CD4-positive, alpha-beta memory T cell (primary cell): ENCODE measurements at regions of chr11 and their contacts with region 1.

Region 1: GRCh38 chr11:46392421-46393230 is 1.1 kb upstream of the CHRM4 start:
- DNase-seq: peak; percentile 75 to 80 (median 76)
- H3K4me3 ChIP-seq: peak overlapping the region in 1 of 2 donors; percentile 29
- H3K4me3 Mint-ChIP-seq: peak overlapping the region; percentile 63 to 84 (median 80)
- H3K27ac ChIP-seq: no peak overlapping the region
- H3K27ac Mint-ChIP-seq: peak overlapping the region in 4 of 7 donors; percentile 15 to 81 (median 70)
- H3K4me1 ChIP-seq: peaks cover 42% of the 10 kb centered on the region
- H3K4me1 Mint-ChIP-seq: peaks cover 13 to 39% (median 24%) of the 10 kb centered on the region in 4 donors
- H3K27me3 ChIP-seq: peaks cover 23% of the 10 kb centered on the region
- H3K27me3 Mint-ChIP-seq: peaks cover 14 to 32% of the 10 kb centered on the region in 2 donors

Region 2: GRCh38 chr11:45885274-45885920 is 507.2 kb before region 1 on chr11 and contains the start of gene MAPK8IP1:
- CTCF ChIA-PET with region 1: no interaction called
- POLR2A ChIA-PET with region 1: no interaction called
- intact Hi-C with region 1: loop called (anchors 10 kb)
- DNase-seq: peak; percentile 47 to 67 (median 58)
- H3K4me3 ChIP-seq: no peak within 1 kb of the TSS
- H3K4me3 Mint-ChIP-seq: peak within 1 kb of the TSS; percentile 69 to 84 (median 76)
- H3K27ac ChIP-seq: no peak within 1 kb of the TSS
- H3K27ac Mint-ChIP-seq: peak within 1 kb of the TSS in 6 of 7 donors; percentile 29 to 75 (median 52)
- H3K4me1 ChIP-seq: peaks cover 5% of the 10 kb centered on the region
- H3K4me1 Mint-ChIP-seq: peaks cover 8 to 16% (median 11%) of the 10 kb centered on the region in 4 donors
- H3K27me3 ChIP-seq: no peaks in the 10 kb centered on the region
- H3K27me3 Mint-ChIP-seq: peaks cover 0 to 4% of the 10 kb centered on the region in 2 donors
- total RNA-seq, gene MAPK8IP1: 0.73 to 0.86 TPM

Region 3: DNA sequence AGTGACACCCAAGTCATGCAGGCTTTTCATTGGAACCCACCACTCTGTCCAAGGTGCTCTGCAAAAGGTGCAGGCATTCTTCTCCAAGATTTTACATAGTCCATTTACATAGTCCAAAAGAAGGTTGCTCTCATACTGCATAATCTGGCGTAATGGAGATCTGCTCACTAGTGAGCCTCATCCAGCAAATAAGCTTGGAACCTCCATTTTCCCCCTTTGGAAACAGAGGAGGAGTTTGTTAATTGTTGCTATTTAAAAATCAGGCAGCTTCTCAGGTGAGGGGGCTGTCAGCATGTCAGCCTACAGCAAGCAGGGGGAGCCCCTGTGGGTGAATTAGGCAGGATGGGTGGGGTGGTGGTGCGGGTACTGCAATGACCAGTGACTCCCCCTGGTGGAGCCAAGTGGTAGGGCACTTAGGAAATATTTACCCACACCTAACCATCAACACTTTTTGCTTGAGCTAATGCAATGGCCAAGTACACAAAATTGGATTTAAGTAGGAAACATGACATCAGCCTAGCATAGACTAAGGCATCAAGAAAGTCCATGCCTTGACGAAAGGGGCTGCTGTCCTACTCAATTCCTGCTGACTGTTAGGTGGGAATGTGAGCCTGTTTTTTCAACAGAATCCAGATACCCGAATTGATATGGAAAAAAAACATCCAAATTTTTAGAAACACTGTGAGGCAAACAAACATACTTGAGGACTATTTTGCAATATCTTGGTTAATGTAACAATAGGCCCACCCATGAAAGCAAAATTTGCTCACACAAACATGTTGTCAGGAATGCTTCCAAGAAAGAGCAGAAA is 136.7 kb after region 1 on chr11:
- CTCF ChIA-PET with region 1: interaction called, 4 read pairs
- POLR2A ChIA-PET with region 1: no interaction called
- intact Hi-C with region 1: loop called (anchors 5 kb)
- DNase-seq: peak; percentile 64 to 78 (median 67)
- H3K4me3 ChIP-seq: no peak overlapping the region
- H3K4me3 Mint-ChIP-seq: no peak overlapping the region
- H3K27ac ChIP-seq: no peak overlapping the region
- H3K27ac Mint-ChIP-seq: peak overlapping the region in 4 of 7 donors; percentile 10 to 86 (median 53)
- H3K4me1 ChIP-seq: peaks cover 12% of the 10 kb centered on the region
- H3K4me1 Mint-ChIP-seq: peaks cover 28 to 50% (median 38%) of the 10 kb centered on the region in 4 donors
- H3K27me3 ChIP-seq: no peaks in the 10 kb centered on the region
- H3K27me3 Mint-ChIP-seq: no peaks in the 10 kb centered on the region